Activated naive CD4-positive, alpha-beta T cell treated with anti-CD3 and anti-CD28 coated beads for 36 hours (primary cell): ENCODE measurements at regions of chr11 and their contacts with region 1.

Region 1: GRCh38 chr11:2992234-2992996 is at the start of gene NAP1L4:
- DNase-seq: peak; percentile 98
- H3K4me3 Mint-ChIP-seq: peak within 1 kb of the TSS; percentile 92
- H3K27ac Mint-ChIP-seq: peak within 1 kb of the TSS; percentile 99
- H3K4me1 Mint-ChIP-seq: peaks cover 29% of the 10 kb centered on the region
- H3K27me3 Mint-ChIP-seq: no peaks in the 10 kb centered on the region
- total RNA-seq, gene NAP1L4: 240 to 245 TPM

Region 2: GRCh38 chr11:2142762-2143202 is 849.6 kb before region 1 on chr11:
- CTCF ChIA-PET with region 1: no interaction called
- intact Hi-C with region 1: loop called (anchors 5 kb)
- DNase-seq: peak; percentile 75
- H3K4me3 Mint-ChIP-seq: peak overlapping the region; percentile 49
- H3K27ac Mint-ChIP-seq: peak overlapping the region; percentile 63
- H3K4me1 Mint-ChIP-seq: peaks cover 34% of the 10 kb centered on the region
- H3K27me3 Mint-ChIP-seq: peaks cover 56% of the 10 kb centered on the region

Region 3: DNA sequence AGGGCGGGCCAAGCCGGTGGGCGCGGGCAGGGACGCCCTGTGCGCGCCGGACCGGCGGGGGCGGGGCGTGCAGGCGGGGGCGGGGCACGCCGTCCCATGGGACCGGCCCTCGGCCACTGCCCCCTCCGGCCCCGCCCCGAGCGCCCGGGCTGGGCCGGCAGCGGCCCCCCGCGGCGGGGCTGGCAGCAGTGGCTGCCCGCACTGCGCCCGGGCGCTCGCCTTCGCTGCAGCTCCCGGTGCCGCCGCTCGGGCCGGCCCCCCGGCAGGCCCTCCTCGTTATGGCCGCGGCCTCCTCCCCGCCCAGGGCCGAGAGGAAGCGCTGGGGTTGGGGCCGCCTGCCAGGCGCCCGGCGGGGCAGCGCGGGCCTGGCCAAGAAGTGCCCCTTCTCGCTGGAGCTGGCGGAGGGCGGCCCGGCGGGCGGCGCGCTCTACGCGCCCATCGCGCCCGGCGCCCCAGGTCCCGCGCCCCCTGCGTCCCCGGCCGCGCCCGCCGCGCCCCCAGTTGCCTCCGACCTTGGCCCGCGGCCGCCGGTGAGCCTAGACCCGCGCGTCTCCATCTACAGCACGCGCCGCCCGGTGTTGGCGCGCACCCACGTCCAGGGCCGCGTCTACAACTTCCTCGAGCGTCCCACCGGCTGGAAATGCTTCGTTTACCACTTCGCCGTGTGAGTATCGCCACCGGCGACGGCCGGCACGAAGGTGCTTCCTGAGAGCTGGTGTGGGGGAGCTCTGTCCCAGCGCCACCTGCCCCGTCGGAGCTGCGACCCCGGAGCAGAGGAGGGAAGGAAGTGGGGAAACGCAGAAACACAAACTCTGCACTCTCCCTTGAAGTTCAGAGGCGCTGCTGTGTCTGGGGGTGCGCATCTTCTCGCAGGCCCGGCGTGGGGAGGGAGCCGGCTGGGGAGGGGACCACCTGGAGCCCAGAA is 547.3 kb before region 1 on chr11 and contains the start of gene KCNQ1:
- CTCF ChIA-PET with region 1: no interaction called
- intact Hi-C with region 1: loop called (anchors 5 kb)
- DNase-seq: peak; percentile 40
- H3K4me3 Mint-ChIP-seq: peak within 1 kb of the TSS; percentile 89
- H3K27ac Mint-ChIP-seq: no peak within 1 kb of the TSS
- H3K4me1 Mint-ChIP-seq: peaks cover 26% of the 10 kb centered on the region
- H3K27me3 Mint-ChIP-seq: no peaks in the 10 kb centered on the region
- total RNA-seq, gene KCNQ1: 10.6 to 10.8 TPM

Region 4: DNA sequence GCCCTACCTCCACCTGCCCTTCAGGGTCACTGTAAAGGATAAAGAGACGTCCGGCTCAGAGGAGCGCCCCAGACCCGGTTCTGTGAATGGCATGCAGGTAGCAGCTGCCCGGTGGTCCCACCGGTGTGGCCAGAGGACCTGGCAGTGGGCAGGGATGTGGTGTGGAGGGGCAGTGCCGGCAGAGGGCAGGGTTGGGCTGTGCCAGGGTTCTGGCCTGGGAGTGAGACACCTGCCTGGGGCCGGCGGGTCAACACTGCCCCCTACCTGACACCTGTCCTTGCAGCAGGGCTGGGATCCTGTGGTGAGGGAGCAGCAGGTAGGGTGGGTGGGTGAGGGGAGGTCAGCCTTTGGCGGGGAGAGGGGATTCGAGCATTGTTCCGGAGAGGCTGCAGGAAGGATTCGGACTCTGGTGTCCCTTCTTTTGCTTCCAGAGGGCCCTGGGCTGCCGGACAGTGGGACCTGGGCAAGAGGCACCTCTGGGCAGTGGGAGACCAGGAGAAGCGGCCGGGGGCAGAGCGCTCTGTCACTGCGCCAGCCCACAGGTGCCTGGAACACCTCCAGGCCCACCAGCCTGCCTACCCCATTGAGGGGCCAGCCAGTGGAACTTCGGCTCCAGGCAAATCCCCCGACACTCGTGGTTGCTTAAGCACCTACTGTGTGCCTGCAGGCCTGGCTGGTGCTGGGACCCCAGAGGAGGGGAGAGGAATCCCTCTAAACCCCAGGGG is 61.5 kb before region 1 on chr11:
- CTCF ChIA-PET with region 1: no interaction called
- intact Hi-C with region 1: loop called (anchors 1 kb)
- DNase-seq: peak; percentile 83
- H3K4me3 Mint-ChIP-seq: peak overlapping the region; percentile 66
- H3K27ac Mint-ChIP-seq: peak overlapping the region; percentile 72
- H3K4me1 Mint-ChIP-seq: peaks cover 24% of the 10 kb centered on the region
- H3K27me3 Mint-ChIP-seq: peaks cover 20% of the 10 kb centered on the region

Region 5: DNA sequence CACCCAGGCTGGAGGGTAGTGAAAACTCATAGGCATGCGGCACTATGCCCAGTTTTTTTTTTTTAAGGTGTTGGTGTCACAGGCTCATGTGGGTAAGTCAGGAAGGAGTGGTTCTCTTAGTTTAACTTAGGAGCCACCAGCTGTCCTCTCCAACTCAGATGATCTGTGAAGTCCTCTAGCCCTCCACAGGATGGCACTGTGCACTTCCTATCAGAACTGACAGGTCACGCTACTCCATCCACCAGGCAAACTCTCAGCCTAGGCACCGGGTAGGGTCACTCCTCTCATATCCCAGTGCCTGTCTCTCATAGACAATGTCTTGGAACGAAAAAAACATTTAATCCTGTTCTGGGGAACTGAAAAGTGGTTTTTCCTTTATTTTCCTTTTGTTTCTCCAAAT is 16.8 kb before region 1 on chr11:
- CTCF ChIA-PET with region 1: interaction called, 7 read pairs
- intact Hi-C with region 1: loop called (anchors 1 kb)
- DNase-seq: peak; percentile 65
- H3K4me3 Mint-ChIP-seq: no peak overlapping the region
- H3K27ac Mint-ChIP-seq: peak overlapping the region; percentile 25
- H3K4me1 Mint-ChIP-seq: peaks cover 26% of the 10 kb centered on the region
- H3K27me3 Mint-ChIP-seq: no peaks in the 10 kb centered on the region

Region 6: GRCh38 chr11:3021125-3021524 is 28.7 kb after region 1 on chr11:
- CTCF ChIA-PET with region 1: no interaction called
- intact Hi-C with region 1: loop called (anchors 2 kb)
- DNase-seq: peak; percentile 46
- H3K4me3 Mint-ChIP-seq: no peak overlapping the region
- H3K27ac Mint-ChIP-seq: no peak overlapping the region
- H3K4me1 Mint-ChIP-seq: peaks cover 38% of the 10 kb centered on the region
- H3K27me3 Mint-ChIP-seq: no peaks in the 10 kb centered on the region

Region 7: GRCh38 chr11:3378426-3379423 is 386.3 kb after region 1 on chr11 and contains the start of gene ZNF195:
- CTCF ChIA-PET with region 1: no interaction called
- intact Hi-C with region 1: loop called (anchors 1 kb)
- DNase-seq: peak; percentile 100
- H3K4me3 Mint-ChIP-seq: peak within 1 kb of the TSS; percentile 97
- H3K27ac Mint-ChIP-seq: peak within 1 kb of the TSS; percentile 94
- H3K4me1 Mint-ChIP-seq: peaks cover 48% of the 10 kb centered on the region
- H3K27me3 Mint-ChIP-seq: no peaks in the 10 kb centered on the region
- total RNA-seq, gene ZNF195: 26.7 to 29.2 TPM